ENCODE measurements at regions of chr11 and their contacts with region 1.

Region 1: DNA sequence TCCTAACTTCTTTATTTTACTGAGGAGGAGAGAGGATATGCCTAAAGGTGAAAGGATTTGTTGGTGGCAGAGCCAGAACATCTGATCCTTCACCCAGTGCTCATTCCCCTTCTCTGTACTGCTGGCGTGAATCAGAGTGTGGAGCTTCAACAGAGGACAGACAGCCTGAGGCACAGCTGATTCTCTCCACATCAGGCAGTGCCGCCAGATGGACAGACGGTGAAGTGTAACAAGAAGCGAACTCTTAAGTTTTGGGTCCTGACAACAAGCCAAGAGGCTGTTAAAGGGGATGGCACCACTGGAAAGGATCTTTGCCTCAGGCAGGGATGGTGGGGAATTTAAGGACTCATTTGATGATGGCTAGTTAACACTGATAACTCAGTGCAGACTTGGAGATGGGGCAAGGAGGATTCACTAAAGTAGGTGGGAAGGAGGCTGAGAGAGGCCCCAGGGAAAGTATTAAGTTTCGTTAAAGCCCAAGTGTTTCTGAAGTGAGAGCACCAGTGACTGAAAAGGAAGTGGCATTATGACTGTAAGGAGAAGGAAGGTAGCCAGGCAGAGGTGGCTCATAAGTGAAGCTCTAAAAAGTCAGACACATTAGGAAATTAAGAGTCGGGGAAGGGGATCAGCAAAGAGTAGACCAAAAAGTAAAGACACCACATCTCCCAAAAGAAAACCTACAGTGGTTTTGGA is 81.3 kb downstream of the CLPB start:
- DNase-seq: peak; percentile 47
- ATAC-seq: peak; percentile 96
- H3K4me3 Mint-ChIP-seq: no peak overlapping the region
- H3K27ac Mint-ChIP-seq: no peak overlapping the region
- H3K4me1 Mint-ChIP-seq: no peaks in the 10 kb centered on the region
- H3K27me3 Mint-ChIP-seq: no peaks in the 10 kb centered on the region

Region 2: DNA sequence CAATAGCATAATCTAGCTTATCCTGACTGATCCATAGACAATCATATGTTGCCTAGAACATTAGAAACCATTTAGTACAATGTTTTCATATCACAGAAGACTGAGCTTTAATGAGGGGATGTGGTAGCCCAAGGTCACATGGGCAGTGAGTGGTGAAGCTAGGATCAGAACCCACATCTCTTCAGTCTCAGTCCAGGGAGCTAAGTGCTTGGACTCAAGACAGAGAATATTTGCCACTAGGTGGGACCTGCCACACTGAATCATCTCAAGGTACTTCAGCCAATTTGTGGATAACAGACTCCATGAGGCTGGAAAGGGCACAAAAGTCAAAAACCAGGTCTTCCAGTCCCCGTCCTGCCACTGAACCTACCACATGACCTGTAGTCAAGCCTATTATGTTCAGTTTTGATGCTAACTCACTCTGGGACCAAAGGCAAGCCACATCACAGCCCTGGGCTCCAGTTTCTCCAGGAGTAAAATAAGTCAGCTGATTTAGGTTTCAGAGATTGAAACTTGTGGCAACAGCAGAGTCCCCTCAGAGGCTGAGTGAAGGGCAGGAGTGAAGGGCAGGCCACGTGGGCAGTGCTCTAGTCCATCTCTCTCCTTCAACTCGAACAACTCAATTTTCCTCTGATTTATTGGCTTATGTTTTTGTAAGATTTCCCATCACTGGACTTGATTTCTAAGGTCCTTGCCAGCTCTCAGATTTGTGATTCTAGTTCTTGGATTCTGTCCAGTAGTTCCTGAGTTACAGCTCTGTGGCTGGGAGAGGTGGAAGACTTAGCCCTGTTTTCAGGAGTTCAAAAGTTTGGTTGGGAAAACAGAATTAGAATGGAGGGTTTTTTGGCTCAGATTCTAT is 24.4 kb before region 1 on chr11:
- CTCF ChIA-PET with region 1: interaction called, 3 read pairs
- POLR2A ChIA-PET with region 1: no interaction called
- intact Hi-C with region 1: loop called (anchors 1 to 2 kb)
- DNase-seq: no peak
- ATAC-seq: no peak
- H3K4me3 Mint-ChIP-seq: no peak overlapping the region
- H3K27ac Mint-ChIP-seq: no peak overlapping the region
- H3K4me1 Mint-ChIP-seq: peaks cover 25% of the 10 kb centered on the region
- H3K27me3 Mint-ChIP-seq: no peaks in the 10 kb centered on the region